ENCODE measurements at regions of chr13 and their contacts with region 1.

Region 1: DNA sequence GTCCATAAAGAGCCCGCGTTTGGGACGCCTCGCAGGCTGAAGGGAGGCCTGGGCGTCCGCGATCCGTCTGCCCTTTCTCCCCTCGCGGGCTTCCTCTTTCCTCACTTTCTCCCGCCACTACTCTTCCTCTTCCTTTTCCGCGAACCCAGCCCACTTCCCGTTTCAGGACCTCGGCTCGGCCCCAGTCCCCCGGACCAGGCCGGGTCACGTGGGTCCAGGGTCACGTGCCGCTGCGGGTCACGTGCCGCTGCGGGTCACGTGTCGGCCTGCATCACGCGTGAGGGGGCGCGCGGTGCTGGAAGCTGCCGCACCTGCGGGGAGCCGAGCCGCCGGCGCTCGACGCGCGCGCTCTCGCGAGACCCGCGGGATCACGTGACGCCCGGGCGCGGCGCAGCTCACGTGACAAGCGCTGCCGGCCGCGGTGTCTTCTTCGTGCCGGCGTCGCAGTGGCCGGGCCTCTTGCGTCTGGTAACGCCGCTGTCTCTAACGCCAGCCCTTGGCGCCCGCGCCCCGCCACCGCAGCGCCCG is at the start of gene LAMP1:
- DNase-seq: peak; percentile 96
- ATAC-seq: peak; percentile 86
- H3K4me3 Mint-ChIP-seq: peak within 1 kb of the TSS; percentile 89
- H3K27ac Mint-ChIP-seq: peak within 1 kb of the TSS; percentile 98
- H3K4me1 Mint-ChIP-seq: peaks cover 30% of the 10 kb centered on the region
- H3K27me3 Mint-ChIP-seq: peaks cover 26% of the 10 kb centered on the region
- total RNA-seq, gene LAMP1: 81.1 TPM

Region 2: DNA sequence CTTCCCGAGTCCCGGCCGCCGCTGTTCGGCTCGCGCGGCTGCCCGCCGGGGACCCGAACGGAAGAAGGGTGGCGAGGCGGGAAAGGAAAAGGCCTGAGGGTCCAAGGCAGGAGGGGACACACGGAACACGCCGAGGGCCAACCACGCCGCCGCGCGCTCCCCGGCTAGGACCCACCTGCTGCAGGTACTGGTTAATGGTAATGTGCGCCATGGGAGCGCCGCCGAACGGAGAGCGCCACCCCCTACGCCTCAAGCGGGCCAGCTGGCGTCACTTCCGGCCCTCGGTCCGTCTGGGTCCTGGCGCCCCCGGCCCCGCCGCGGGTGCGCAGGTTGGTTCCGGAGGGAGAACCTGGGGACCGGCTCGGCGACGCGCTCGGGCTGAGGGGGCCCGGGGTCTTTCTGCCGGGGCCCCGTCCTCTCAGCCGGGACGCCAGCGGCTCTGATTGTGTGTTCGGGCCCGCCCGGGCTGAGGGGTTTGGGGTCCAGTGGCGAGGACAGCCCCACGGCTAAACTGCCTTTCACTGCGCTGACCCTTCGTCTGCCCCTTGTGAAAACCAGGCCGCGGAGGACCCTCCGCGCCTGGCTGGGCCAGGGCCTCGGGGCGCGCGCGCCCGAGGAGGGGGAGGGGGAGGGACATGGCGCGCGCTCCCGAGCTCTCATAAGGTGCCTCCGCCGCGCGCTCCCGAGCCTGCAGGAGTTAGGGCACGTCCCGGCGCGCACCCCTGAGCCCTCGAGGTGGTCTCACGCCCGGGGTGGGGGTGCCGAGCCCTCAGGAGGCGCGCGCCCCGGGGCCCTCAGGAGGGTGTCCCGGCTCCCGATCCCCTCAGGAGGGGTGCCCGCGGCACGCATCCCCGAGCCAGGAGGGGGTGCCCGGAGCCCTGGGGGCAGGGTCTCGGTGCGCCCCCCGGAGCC is 88.2 kb before region 1 on chr13 and contains the start of gene PCID2:
- CTCF ChIA-PET with region 1: no interaction called
- POLR2A ChIA-PET with region 1: interaction called, 29 read pairs
- DNase-seq: peak; percentile 90
- ATAC-seq: peak; percentile 76
- H3K4me3 Mint-ChIP-seq: peak within 1 kb of the TSS; percentile 69
- H3K27ac Mint-ChIP-seq: peak within 1 kb of the TSS; percentile 90
- H3K4me1 Mint-ChIP-seq: peaks cover 60% of the 10 kb centered on the region
- H3K27me3 Mint-ChIP-seq: no peaks in the 10 kb centered on the region
- total RNA-seq, gene PCID2: 49.3 to 52.4 TPM